Activated CD4-positive, alpha-beta T cell treated with anti-CD3 and anti-CD28 coated beads for 36 hours (primary cell): ENCODE measurements at regions of chr2 and their contacts with region 1.

Region 1: GRCh38 chr2:137838255-137839092 is 125.8 kb upstream of the HNMT start:
- DNase-seq: no peak
- ATAC-seq: no peak
- H3K4me3 Mint-ChIP-seq: no peak overlapping the region
- H3K27ac Mint-ChIP-seq: no peak overlapping the region
- H3K4me1 Mint-ChIP-seq: no peaks in the 10 kb centered on the region
- H3K27me3 Mint-ChIP-seq: peaks cover 6% of the 10 kb centered on the region

Region 2: GRCh38 chr2:136423516-136423996 is 1414.9 kb before region 1 on chr2:
- CTCF ChIA-PET with region 1: interaction called, 5 read pairs
- POLR2A ChIA-PET with region 1: no interaction called
- intact Hi-C with region 1: loop called (anchors 1 kb)
- DNase-seq: peak; percentile 93
- ATAC-seq: peak; percentile 98
- H3K4me3 Mint-ChIP-seq: peak overlapping the region; percentile 70
- H3K27ac Mint-ChIP-seq: peak overlapping the region; percentile 56
- H3K4me1 Mint-ChIP-seq: peaks cover 18% of the 10 kb centered on the region
- H3K27me3 Mint-ChIP-seq: peaks cover 43% of the 10 kb centered on the region

Region 3: GRCh38 chr2:136932700-136933099 is 905.8 kb before region 1 on chr2:
- CTCF ChIA-PET with region 1: no interaction called
- POLR2A ChIA-PET with region 1: no interaction called
- intact Hi-C with region 1: loop called in 1 of 2 experiments (anchors 5 kb)
- DNase-seq: no peak
- ATAC-seq: no peak
- H3K4me3 Mint-ChIP-seq: no peak overlapping the region
- H3K27ac Mint-ChIP-seq: no peak overlapping the region
- H3K4me1 Mint-ChIP-seq: no peaks in the 10 kb centered on the region
- H3K27me3 Mint-ChIP-seq: no peaks in the 10 kb centered on the region

Region 4: GRCh38 chr2:137220438-137220993 is 618.0 kb before region 1 on chr2:
- CTCF ChIA-PET with region 1: no interaction called
- POLR2A ChIA-PET with region 1: no interaction called
- intact Hi-C with region 1: no loop called
- DNase-seq: no peak
- ATAC-seq: no peak
- H3K4me3 Mint-ChIP-seq: no peak overlapping the region
- H3K27ac Mint-ChIP-seq: no peak overlapping the region
- H3K4me1 Mint-ChIP-seq: no peaks in the 10 kb centered on the region
- H3K27me3 Mint-ChIP-seq: no peaks in the 10 kb centered on the region

Region 5: GRCh38 chr2:137467246-137467862 is 371.1 kb before region 1 on chr2:
- CTCF ChIA-PET with region 1: no interaction called
- POLR2A ChIA-PET with region 1: no interaction called
- intact Hi-C with region 1: loop called (anchors 1 to 10 kb)
- DNase-seq: peak; percentile 31
- ATAC-seq: no peak
- H3K4me3 Mint-ChIP-seq: no peak overlapping the region
- H3K27ac Mint-ChIP-seq: no peak overlapping the region
- H3K4me1 Mint-ChIP-seq: no peaks in the 10 kb centered on the region
- H3K27me3 Mint-ChIP-seq: no peaks in the 10 kb centered on the region

Region 6: DNA sequence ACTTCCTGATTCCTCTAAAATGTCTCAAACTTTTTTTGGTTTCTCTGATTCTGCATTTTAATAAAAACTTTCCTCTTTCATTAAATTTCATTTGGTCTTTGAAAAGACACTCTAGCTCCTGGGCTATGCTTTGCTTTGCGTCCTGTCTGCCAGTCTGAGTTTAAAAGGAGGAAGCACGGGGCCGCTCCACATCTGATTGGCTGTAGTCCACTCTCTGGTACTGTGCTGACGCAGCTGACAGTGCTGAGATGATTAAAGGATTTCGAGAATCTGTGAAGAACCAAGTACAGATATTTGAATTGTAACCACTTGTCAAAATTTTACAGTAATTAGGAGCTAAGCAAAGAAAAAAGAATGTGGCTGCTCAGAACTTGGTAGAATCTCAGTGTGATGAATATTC is 73.8 kb before region 1 on chr2:
- CTCF ChIA-PET with region 1: no interaction called
- POLR2A ChIA-PET with region 1: no interaction called
- intact Hi-C with region 1: no loop called
- DNase-seq: no peak
- ATAC-seq: no peak
- H3K4me3 Mint-ChIP-seq: no peak overlapping the region
- H3K27ac Mint-ChIP-seq: no peak overlapping the region
- H3K4me1 Mint-ChIP-seq: no peaks in the 10 kb centered on the region
- H3K27me3 Mint-ChIP-seq: peaks cover 1% of the 10 kb centered on the region